ENCODE measurements at regions of chr12 and their contacts with region 1.

Region 1: GRCh38 chr12:15779925-15780324 is 9.3 kb downstream of the EPS8 start:
- DNase-seq: no peak
- H3K4me3 ChIP-seq: no peak overlapping the region
- H3K4me3 Mint-ChIP-seq: peak overlapping the region; percentile 35
- H3K27ac Mint-ChIP-seq: no peak overlapping the region
- H3K4me1 ChIP-seq: peaks cover 26% of the 10 kb centered on the region
- H3K4me1 Mint-ChIP-seq: peaks cover 21% of the 10 kb centered on the region
- H3K27me3 ChIP-seq: no peaks in the 10 kb centered on the region
- H3K27me3 Mint-ChIP-seq: peaks cover 6% of the 10 kb centered on the region
- CTCF ChIP-seq: no peak

Region 2: DNA sequence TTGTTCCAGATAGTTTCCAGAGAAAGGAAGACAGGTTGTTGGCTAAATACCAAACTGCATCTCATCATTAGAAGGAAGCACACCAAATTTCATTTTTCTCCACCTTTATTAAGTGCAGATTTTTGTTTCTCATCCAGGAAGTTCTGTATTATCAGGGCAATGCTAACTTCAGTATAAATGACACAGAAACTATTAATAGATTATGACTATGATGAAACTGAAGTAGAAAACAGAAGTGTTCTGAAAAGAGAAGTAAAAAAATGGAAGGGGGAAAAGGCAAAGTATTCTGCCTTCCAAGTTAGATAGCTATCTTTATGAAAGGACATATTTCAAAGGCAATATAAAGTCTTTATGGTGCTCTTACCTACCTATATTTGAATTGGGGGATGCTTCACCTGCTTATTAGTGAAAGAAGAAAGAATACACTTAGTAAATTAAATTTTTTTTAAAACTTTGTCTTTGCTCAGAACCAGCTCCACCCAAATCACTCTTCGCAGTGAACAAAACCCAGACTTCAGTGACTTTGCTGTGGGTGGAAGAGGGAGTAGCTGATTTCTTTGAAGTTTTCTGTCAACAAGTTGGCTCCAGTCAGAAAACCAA is 233.7 kb before region 1 on chr12:
- CTCF ChIA-PET with region 1: no interaction called
- POLR2A ChIA-PET with region 1: no interaction called
- intact Hi-C with region 1: no loop called
- DNase-seq: no peak
- H3K4me3 ChIP-seq: no peak overlapping the region
- H3K4me3 Mint-ChIP-seq: no peak overlapping the region
- H3K27ac Mint-ChIP-seq: no peak overlapping the region
- H3K4me1 ChIP-seq: no peaks in the 10 kb centered on the region
- H3K4me1 Mint-ChIP-seq: no peaks in the 10 kb centered on the region
- H3K27me3 ChIP-seq: no peaks in the 10 kb centered on the region; the same call in 1 of the 2 replicates
- H3K27me3 Mint-ChIP-seq: peaks cover 16% of the 10 kb centered on the region
- CTCF ChIP-seq: no peak

Region 3: DNA sequence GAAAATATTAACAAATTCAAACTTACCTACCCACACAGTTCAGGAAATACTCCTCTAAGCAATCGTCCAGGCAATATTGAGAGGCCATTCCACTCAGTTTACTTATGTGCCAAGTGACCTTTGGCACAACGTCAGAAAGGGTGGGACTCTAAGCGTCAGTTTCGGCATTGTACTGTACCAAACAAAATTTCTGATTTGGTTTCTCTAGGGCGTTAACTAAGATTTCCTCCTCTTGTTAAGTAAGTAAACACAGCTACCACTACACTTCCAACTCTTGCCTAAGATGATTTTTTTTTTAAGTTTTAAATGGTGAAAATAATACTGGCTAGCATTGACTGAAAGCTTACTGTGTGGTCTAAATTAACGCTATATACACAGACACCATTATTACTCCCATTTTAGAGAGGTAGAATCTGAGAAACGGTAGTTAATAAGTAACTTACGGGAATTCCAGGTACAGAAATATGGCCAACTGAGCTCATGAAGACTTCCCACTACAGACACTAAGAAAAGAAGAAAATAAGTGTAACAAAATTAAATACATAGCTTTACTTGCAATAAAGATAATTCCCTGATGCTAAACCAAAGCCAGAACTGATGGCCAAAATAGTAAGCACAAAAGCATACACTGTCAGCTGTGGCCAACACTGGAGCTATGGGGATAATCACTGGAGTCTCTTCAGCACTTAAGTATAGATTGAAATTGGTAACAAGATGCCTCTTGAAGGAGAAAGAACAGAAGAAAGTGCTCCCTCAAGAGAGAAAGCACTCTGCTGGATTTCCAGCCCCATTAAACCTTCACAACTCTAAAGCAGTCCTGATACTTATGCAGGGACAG is 66.9 kb before region 1 on chr12:
- CTCF ChIA-PET with region 1: no interaction called
- POLR2A ChIA-PET with region 1: no interaction called
- intact Hi-C with region 1: loop called (anchors 2 kb)
- DNase-seq: peak; percentile 53 to 67
- H3K4me3 ChIP-seq: peak overlapping the region; percentile 32
- H3K4me3 Mint-ChIP-seq: peak overlapping the region; percentile 86
- H3K27ac Mint-ChIP-seq: peak overlapping the region; percentile 96
- H3K4me1 ChIP-seq: peaks cover 26% of the 10 kb centered on the region
- H3K4me1 Mint-ChIP-seq: peaks cover 17% of the 10 kb centered on the region
- H3K27me3 ChIP-seq: no peaks in the 10 kb centered on the region
- H3K27me3 Mint-ChIP-seq: no peaks in the 10 kb centered on the region
- CTCF ChIP-seq: no peak

Region 4: GRCh38 chr12:15882118-15882971 is 102.4 kb after region 1 on chr12 and contains the start of gene STRAP:
- CTCF ChIA-PET with region 1: no interaction called
- POLR2A ChIA-PET with region 1: no interaction called
- intact Hi-C with region 1: no loop called
- DNase-seq: peak; percentile 98
- H3K4me3 ChIP-seq: peak within 1 kb of the TSS; percentile 68
- H3K4me3 Mint-ChIP-seq: peak within 1 kb of the TSS; percentile 82
- H3K27ac Mint-ChIP-seq: peak within 1 kb of the TSS; percentile 98
- H3K4me1 ChIP-seq: peaks cover 16% of the 10 kb centered on the region
- H3K4me1 Mint-ChIP-seq: peaks cover 33% of the 10 kb centered on the region
- H3K27me3 ChIP-seq: no peaks in the 10 kb centered on the region
- H3K27me3 Mint-ChIP-seq: no peaks in the 10 kb centered on the region
- CTCF ChIP-seq: no peak
- total RNA-seq, gene STRAP: 246 and 262 TPM in 2 replicates

Region 5: DNA sequence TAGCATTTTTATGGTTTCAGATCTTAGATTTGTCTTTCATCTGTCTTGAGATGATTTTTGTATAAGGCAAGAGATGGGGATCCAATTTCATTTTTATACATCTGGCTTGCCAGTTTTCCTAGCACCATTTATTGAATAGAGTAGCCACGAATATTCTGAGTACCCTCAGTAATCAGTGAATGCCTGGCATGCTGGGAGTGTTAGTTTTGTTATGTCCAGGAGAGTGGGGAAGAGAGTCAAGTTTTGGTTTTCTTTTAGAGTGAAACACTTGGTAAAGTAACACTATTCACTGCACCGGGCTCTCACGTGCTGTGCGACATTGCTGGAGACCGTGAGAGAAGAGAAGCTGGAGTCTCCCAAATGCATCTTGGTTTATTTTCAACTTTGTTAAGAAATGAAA is 162.6 kb after region 1 on chr12:
- CTCF ChIA-PET with region 1: no interaction called
- POLR2A ChIA-PET with region 1: no interaction called
- intact Hi-C with region 1: no loop called
- DNase-seq: no peak
- H3K4me3 ChIP-seq: no peak overlapping the region
- H3K4me3 Mint-ChIP-seq: no peak overlapping the region
- H3K27ac Mint-ChIP-seq: no peak overlapping the region
- H3K4me1 ChIP-seq: no peaks in the 10 kb centered on the region
- H3K4me1 Mint-ChIP-seq: no peaks in the 10 kb centered on the region
- H3K27me3 ChIP-seq: no peaks in the 10 kb centered on the region
- H3K27me3 Mint-ChIP-seq: no peaks in the 10 kb centered on the region
- CTCF ChIP-seq: no peak

Measured in Caco-2 (cell line).